Sigmoid colon (tissue), 7 donors: ENCODE measurements at regions of chr5 and their contacts with region 1.

Region 1: DNA sequence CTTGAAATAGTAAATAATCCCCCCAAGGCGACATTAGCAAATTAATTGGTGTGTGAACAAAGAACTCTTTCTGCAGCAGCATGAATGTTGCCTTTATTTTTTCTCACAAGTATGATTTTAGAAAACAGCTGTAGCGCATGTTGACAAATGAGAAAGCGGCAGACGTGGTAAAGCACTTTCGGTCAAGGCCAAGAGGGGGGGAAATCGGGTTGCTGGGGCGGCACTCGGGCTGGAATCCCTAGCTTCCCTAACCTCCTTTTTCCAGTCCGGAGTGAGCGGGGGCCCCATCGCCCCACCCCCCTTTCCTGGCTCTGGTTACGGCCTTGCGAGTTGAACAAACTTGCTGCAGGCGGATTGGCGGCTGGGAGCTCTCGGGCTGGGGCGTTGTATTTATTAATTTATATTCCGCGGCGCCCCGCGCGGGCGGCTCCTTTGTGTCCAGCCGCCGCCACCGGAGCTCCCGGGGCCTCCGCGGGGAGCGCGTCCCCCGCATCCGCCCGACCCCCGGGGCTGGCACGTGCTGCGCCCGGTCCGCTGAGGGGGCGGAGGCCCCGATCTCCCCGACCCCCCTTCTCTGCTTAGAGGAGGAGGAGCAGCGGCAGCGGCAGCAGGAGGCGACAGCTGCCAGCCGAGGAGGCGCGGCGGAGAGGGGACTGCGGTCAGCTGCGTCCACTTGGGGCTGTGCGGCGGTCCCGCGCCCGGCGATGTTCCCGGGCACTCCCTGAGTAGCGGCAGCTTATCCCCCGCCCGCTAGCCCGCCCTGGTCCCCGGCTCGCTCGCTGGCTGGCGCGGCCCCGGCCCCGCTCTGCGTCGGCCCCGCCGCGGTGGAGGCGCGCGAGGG is at the start of gene RHOBTB3:
- DNase-seq: peak; percentile 96
- H3K4me3 ChIP-seq: peak within 1 kb of the TSS; percentile 71 to 92 (median 86)
- H3K27ac ChIP-seq: peak within 1 kb of the TSS; percentile 89 to 98 (median 94)
- H3K4me1 ChIP-seq: peaks cover 0 to 61% (median 46%) of the 10 kb centered on the region in 4 donors
- H3K27me3 ChIP-seq: no peaks in the 10 kb centered on the region
- CTCF ChIP-seq: no peak
- EP300 ChIP-seq: peak in 1 of 4 donors; percentile 28
- POLR2A ChIP-seq: peak; percentile 22 to 75
- total RNA-seq, gene RHOBTB3: 75.6 to 151 (median 111) TPM

Region 2: DNA sequence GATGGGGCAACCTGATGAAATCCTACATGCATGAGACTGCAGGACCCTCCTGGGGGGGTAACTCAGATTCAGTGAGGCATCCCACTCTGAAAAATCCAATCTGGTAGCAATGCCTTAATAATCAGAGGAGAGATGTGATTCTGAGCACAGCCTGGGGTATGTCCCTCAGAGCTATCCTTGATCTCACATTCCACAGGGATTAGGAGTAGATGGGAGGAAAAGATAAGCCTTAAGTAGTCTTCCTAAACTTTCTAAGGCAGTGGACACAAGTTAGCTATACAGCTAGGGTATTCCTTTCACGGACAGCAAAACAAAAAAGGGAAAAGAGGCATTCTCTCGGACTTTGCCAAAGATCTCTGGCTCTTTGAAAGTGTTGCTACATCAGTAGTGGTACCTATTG is 44.3 kb before region 1 on chr5:
- intact Hi-C with region 1: no loop called
- DNase-seq: no peak
- H3K4me3 ChIP-seq: no peak overlapping the region
- H3K27ac ChIP-seq: no peak overlapping the region
- H3K4me1 ChIP-seq: no peaks in the 10 kb centered on the region
- H3K27me3 ChIP-seq: no peaks in the 10 kb centered on the region
- CTCF ChIP-seq: no peak
- EP300 ChIP-seq: no peak
- POLR2A ChIP-seq: no peak

Region 3: GRCh38 chr5:95822542-95823181 is 91.7 kb after region 1 on chr5 and contains the start of gene GLRX:
- intact Hi-C with region 1: loop called (anchors 5 kb)
- DNase-seq: peak; percentile 89
- H3K4me3 ChIP-seq: peak within 1 kb of the TSS; percentile 58 to 69 (median 64)
- H3K27ac ChIP-seq: peak within 1 kb of the TSS; percentile 83 to 89 (median 85)
- H3K4me1 ChIP-seq: peaks cover 0 to 53% (median 43%) of the 10 kb centered on the region in 4 donors
- H3K27me3 ChIP-seq: no peaks in the 10 kb centered on the region
- CTCF ChIP-seq: no peak
- EP300 ChIP-seq: no peak
- POLR2A ChIP-seq: peak in 1 of 2 donors; percentile 71
- total RNA-seq, gene GLRX: 30.2 to 43.2 (median 42.8) TPM